IMR-90 (cell line): ENCODE measurements at regions of chr2 and their contacts with region 1.

Region 1: DNA sequence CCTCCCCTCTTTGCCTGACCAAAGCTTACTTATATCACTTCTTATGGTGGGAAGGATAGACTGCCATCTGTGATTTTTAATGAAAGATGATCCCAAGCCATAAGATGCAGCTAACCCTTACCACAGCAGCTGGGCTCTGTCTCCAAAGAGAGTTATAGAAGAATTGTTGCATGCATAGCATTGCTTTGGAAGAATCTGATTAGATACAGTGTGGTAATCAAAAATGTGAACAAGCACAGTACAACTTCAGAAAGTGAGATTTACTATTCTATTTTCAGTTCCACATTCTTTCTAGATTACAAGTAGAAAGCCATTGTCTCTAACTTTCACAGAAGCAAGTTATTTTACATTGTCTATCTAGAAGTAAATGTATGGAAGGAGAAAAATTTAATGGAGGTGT is 129.0 kb upstream of the ACVR2A start:
- DNase-seq: no peak
- ATAC-seq: no peak
- H3K4me3 ChIP-seq: no peak overlapping the region
- H3K27ac ChIP-seq: no peak overlapping the region
- H3K4me1 ChIP-seq: no peaks in the 10 kb centered on the region
- H3K27me3 ChIP-seq: no peaks in the 10 kb centered on the region
- CTCF ChIP-seq: no peak
- POLR2A ChIP-seq: no peak
- RAD21 ChIP-seq: no peak

Region 2: GRCh38 chr2:147696448-147696847 is 19.4 kb before region 1 on chr2:
- CTCF ChIA-PET with region 1: no interaction called
- POLR2A ChIA-PET with region 1: no interaction called
- dilution Hi-C with region 1: no loop called
- in situ Hi-C with region 1: no loop called
- intact Hi-C with region 1: no loop called
- DNase-seq: no peak
- ATAC-seq: no peak
- H3K4me3 ChIP-seq: no peak overlapping the region
- H3K27ac ChIP-seq: no peak overlapping the region
- H3K4me1 ChIP-seq: no peaks in the 10 kb centered on the region
- H3K27me3 ChIP-seq: no peaks in the 10 kb centered on the region
- CTCF ChIP-seq: no peak
- POLR2A ChIP-seq: no peak
- RAD21 ChIP-seq: no peak

Region 3: GRCh38 chr2:147760984-147761383 is 45.2 kb after region 1 on chr2:
- CTCF ChIA-PET with region 1: no interaction called
- POLR2A ChIA-PET with region 1: no interaction called
- dilution Hi-C with region 1: no loop called
- in situ Hi-C with region 1: no loop called
- intact Hi-C with region 1: loop called (anchors 5 kb)
- DNase-seq: peak; percentile 4
- ATAC-seq: no peak
- H3K4me3 ChIP-seq: no peak overlapping the region
- H3K27ac ChIP-seq: no peak overlapping the region
- H3K4me1 ChIP-seq: no peaks in the 10 kb centered on the region
- H3K27me3 ChIP-seq: no peaks in the 10 kb centered on the region
- CTCF ChIP-seq: no peak
- POLR2A ChIP-seq: no peak
- RAD21 ChIP-seq: no peak